Activated CD8-positive, alpha-beta T cell treated with anti-CD3 and anti-CD28 coated beads for 36 hours (primary cell): ENCODE measurements at regions of chr17 and their contacts with region 1.

Region 1: DNA sequence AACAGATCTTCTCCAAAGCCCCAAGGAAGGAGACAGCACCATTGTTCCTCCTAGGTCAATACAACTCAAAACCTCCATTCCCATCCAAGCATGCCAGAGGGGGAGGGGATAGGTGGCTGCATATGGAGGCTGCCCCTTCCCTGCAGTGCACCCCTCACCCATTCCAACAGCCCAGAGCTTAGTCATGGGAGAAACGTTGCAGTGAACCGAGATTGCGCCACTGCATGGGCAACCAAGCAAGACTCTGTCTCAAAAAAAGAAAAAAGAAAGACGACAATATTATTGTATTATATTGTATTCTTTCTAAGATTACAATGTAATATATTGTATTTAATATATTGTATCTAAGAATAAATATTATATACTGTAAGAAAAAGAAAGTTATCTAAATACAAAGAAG is 36.4 kb upstream of the CD300E start:
- DNase-seq: no peak
- ATAC-seq: no peak
- H3K4me3 Mint-ChIP-seq: no peak overlapping the region
- H3K27ac Mint-ChIP-seq: no peak overlapping the region
- H3K4me1 Mint-ChIP-seq: peaks cover 3% of the 10 kb centered on the region
- H3K27me3 Mint-ChIP-seq: peaks cover 17% of the 10 kb centered on the region
- CTCF ChIP-seq: no peak

Region 2: GRCh38 chr17:74619077-74619673 is 40.7 kb before region 1 on chr17:
- CTCF ChIA-PET with region 1: interaction called, 10 read pairs
- POLR2A ChIA-PET with region 1: no interaction called
- intact Hi-C with region 1: no loop called
- DNase-seq: no peak
- ATAC-seq: no peak
- H3K4me3 Mint-ChIP-seq: no peak overlapping the region
- H3K27ac Mint-ChIP-seq: no peak overlapping the region
- H3K4me1 Mint-ChIP-seq: no peaks in the 10 kb centered on the region
- H3K27me3 Mint-ChIP-seq: peaks cover 33% of the 10 kb centered on the region
- CTCF ChIP-seq: no peak

Region 3: GRCh38 chr17:74671031-74671771 is 11.3 kb after region 1 on chr17:
- CTCF ChIA-PET with region 1: interaction called, 22 read pairs
- POLR2A ChIA-PET with region 1: no interaction called
- intact Hi-C with region 1: no loop called
- DNase-seq: peak; percentile 82
- ATAC-seq: peak; percentile 99
- H3K4me3 Mint-ChIP-seq: no peak overlapping the region
- H3K27ac Mint-ChIP-seq: no peak overlapping the region
- H3K4me1 Mint-ChIP-seq: no peaks in the 10 kb centered on the region
- H3K27me3 Mint-ChIP-seq: peaks cover 54% of the 10 kb centered on the region
- CTCF ChIP-seq: no peak

Region 4: DNA sequence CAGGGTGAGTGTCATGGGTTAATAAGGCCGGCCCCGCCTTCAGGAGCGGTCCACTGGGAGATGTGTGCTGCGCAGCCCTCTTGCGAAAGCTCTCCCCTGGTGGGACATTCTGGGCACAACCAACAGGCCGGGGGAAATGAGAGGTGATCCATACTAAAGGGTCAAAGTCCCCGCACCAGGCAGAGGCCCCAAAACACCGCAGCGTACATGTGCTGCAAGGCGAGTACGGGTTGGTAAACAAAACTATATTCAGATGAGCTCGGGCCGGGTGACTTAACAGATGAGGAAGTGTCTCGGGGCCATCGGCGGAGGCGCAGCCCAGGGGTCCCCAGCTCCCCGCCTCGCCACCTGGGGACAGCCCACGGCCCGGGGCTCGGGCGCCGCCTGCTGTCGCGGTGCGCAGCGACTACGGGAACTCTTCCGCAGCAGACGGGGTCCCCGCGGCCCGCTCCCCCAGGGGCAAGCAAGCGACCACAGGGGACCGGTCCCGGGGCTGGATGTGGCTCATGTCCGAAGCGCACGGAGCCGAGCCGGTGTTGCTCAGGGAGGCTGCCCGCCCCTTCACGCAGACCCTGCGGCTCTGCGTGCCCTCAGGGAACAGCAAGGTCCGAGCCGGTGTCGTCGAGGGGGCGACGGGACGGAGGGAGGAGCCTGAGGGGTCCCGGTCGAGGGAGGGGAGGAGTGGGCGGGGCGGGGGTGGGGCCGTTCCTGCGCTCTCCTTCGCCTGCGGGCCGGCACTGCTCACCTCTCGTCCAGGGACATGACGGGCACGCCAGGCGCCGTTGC is 76.8 kb after region 1 on chr17 and contains the start of gene RAB37:
- CTCF ChIA-PET with region 1: interaction called, 207 read pairs
- POLR2A ChIA-PET with region 1: interaction called, 11 read pairs
- intact Hi-C with region 1: loop called (anchors 5 kb)
- DNase-seq: peak; percentile 62
- ATAC-seq: peak; percentile 17
- H3K4me3 Mint-ChIP-seq: peak within 1 kb of the TSS; percentile 78
- H3K27ac Mint-ChIP-seq: peak within 1 kb of the TSS; percentile 90
- H3K4me1 Mint-ChIP-seq: peaks cover 46% of the 10 kb centered on the region
- H3K27me3 Mint-ChIP-seq: no peaks in the 10 kb centered on the region
- CTCF ChIP-seq: peak; percentile 53
- total RNA-seq, gene RAB37: 6.6 to 6.7 TPM

Region 5: GRCh38 chr17:74759243-74759801 is 99.4 kb after region 1 on chr17:
- CTCF ChIA-PET with region 1: interaction called, 14 read pairs
- POLR2A ChIA-PET with region 1: no interaction called
- intact Hi-C with region 1: no loop called
- DNase-seq: peak; percentile 75
- ATAC-seq: peak; percentile 82
- H3K4me3 Mint-ChIP-seq: peak overlapping the region; percentile 51
- H3K27ac Mint-ChIP-seq: peak overlapping the region; percentile 81
- H3K4me1 Mint-ChIP-seq: peaks cover 68% of the 10 kb centered on the region
- H3K27me3 Mint-ChIP-seq: no peaks in the 10 kb centered on the region
- CTCF ChIP-seq: no peak

Region 6: GRCh38 chr17:74776044-74776977 is 116.4 kb after region 1 on chr17 and contains the start of gene NAT9:
- CTCF ChIA-PET with region 1: interaction called, 20 read pairs
- POLR2A ChIA-PET with region 1: interaction called, 3 read pairs
- intact Hi-C with region 1: no loop called
- DNase-seq: peak; percentile 98
- ATAC-seq: peak; percentile 75
- H3K4me3 Mint-ChIP-seq: peak within 1 kb of the TSS; percentile 100
- H3K27ac Mint-ChIP-seq: peak within 1 kb of the TSS; percentile 96
- H3K4me1 Mint-ChIP-seq: peaks cover 57% of the 10 kb centered on the region
- H3K27me3 Mint-ChIP-seq: no peaks in the 10 kb centered on the region
- CTCF ChIP-seq: no peak
- total RNA-seq, gene NAT9: 35.5 to 42.4 TPM

Region 7: DNA sequence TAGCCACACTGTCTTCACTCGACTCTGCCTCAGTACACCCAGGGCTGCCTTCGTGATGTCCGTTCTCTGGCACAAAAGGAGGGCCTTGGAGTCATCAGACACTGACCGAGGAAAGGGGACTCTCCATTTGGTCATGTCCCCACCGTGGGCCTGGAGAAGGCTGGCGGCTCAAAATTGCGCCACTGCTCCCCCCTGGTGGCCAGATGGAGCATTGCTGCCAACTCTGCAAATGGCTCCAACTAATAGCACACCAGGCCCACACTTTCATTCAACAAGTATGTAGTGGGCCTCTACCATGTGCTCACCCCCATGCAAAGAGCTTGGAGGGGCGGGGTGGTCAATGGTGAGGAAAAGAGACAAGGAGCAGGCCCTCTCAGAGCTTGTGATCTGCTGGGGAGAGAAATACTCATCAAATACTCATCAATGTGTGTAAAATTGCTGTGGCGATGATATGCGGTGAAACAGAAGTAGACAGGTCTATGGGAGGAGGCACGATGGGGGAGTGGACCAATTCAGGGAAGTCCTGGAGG is 205.0 kb after region 1 on chr17:
- CTCF ChIA-PET with region 1: interaction called, 20 read pairs
- POLR2A ChIA-PET with region 1: no interaction called
- intact Hi-C with region 1: no loop called
- DNase-seq: peak; percentile 83
- ATAC-seq: peak; percentile 75
- H3K4me3 Mint-ChIP-seq: no peak overlapping the region
- H3K27ac Mint-ChIP-seq: no peak overlapping the region
- H3K4me1 Mint-ChIP-seq: peaks cover 18% of the 10 kb centered on the region
- H3K27me3 Mint-ChIP-seq: peaks cover 17% of the 10 kb centered on the region
- CTCF ChIP-seq: peak; percentile 90

Region 8: DNA sequence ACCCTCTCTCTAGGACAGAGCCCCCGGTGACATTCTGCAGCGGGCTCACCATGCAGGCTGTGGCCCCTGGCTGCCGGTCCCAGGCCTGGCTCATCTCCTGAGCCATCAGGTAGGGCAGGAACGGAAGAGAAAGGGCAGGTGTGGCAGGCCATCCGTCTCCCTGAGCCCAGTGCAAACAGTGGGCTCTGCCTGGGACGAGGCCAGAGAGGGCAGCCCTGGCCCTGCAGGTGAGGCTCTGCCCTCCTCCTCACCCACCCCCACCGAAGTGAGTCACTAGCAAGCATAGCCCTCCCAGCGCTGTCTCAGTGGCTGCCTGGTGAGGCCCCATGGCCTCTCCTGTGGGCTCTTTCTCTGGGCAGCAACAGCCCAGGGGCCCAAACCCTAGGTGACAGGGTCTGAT is 290.3 kb after region 1 on chr17:
- CTCF ChIA-PET with region 1: no interaction called
- POLR2A ChIA-PET with region 1: no interaction called
- intact Hi-C with region 1: no loop called
- DNase-seq: no peak
- ATAC-seq: no peak
- H3K4me3 Mint-ChIP-seq: no peak overlapping the region
- H3K27ac Mint-ChIP-seq: no peak overlapping the region
- H3K4me1 Mint-ChIP-seq: no peaks in the 10 kb centered on the region
- H3K27me3 Mint-ChIP-seq: no peaks in the 10 kb centered on the region
- CTCF ChIP-seq: no peak